ENCODE measurements at regions of chr19 and their contacts with region 1.

Region 1: DNA sequence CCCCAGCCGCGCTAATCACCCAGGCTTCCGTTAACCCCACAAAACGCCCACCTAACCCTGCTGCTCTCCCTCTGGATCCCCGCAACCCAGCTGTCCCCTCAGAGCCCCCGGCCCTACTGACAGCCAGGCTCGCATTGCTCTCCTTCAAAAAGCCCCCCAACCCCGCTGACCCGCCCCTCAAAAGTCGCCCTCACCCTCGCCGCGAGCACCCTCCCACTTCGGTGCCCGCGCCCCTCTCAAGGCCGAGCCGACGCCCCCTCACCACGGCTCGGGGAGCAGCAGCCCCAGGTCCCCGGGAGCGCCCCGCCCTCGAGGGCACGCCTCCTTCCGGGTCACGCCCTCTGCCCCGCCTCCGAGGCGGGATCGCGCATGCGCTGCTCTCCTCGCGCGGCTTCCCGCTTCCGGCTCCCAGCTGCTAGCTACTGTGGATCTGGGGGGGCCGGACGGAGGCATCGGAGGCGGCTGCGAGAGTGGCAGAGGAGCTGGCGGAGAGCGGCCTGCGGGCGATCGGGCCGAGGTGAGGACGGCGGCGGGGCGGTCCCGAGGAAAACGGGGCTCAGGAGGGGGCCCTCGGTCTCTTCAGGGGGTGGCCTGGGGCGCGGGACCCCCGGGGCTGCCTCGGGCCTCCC is 46.1 kb downstream of the ARHGEF18 start:
- DNase-seq: peak; percentile 95
- H3K4me3 Mint-ChIP-seq: peak overlapping the region; percentile 87
- H3K27ac Mint-ChIP-seq: peak overlapping the region; percentile 85
- H3K4me1 Mint-ChIP-seq: peaks cover 28% of the 10 kb centered on the region
- H3K27me3 Mint-ChIP-seq: no peaks in the 10 kb centered on the region

Region 2: GRCh38 chr19:7355151-7355820 is 39.6 kb before region 1 on chr19:
- CTCF ChIA-PET with region 1: interaction called, 14 read pairs
- POLR2A ChIA-PET with region 1: interaction called, 3 read pairs
- intact Hi-C with region 1: no loop called
- DNase-seq: no peak
- H3K4me3 Mint-ChIP-seq: no peak overlapping the region
- H3K27ac Mint-ChIP-seq: no peak overlapping the region
- H3K4me1 Mint-ChIP-seq: peaks cover 35% of the 10 kb centered on the region
- H3K27me3 Mint-ChIP-seq: no peaks in the 10 kb centered on the region

Measured in activated CD4-positive, alpha-beta memory T cell treated with anti-CD3 and anti-CD28 coated beads for 36 hours (primary cell).